IMR-90 (cell line): ENCODE measurements at regions of chr3 and their contacts with region 1.

Region 1: GRCh38 chr3:35908366-35909232 is 269.3 kb downstream of the ARPP21 start:
- DNase-seq: peak; percentile 70
- ATAC-seq: peak; percentile 72
- H3K4me3 ChIP-seq: no peak overlapping the region
- H3K27ac ChIP-seq: no peak overlapping the region
- H3K4me1 ChIP-seq: no peaks in the 10 kb centered on the region
- H3K27me3 ChIP-seq: no peaks in the 10 kb centered on the region
- CTCF ChIP-seq: peak; percentile 61
- POLR2A ChIP-seq: no peak
- RAD21 ChIP-seq: peak; percentile 55

Region 2: GRCh38 chr3:34260271-34261006 is 1648.2 kb before region 1 on chr3:
- CTCF ChIA-PET with region 1: no interaction called
- POLR2A ChIA-PET with region 1: no interaction called
- dilution Hi-C with region 1: no loop called
- in situ Hi-C with region 1: no loop called
- intact Hi-C with region 1: loop called (anchors 2 kb)
- DNase-seq: peak; percentile 50
- ATAC-seq: peak; percentile 82
- H3K4me3 ChIP-seq: no peak overlapping the region
- H3K27ac ChIP-seq: no peak overlapping the region
- H3K4me1 ChIP-seq: no peaks in the 10 kb centered on the region
- H3K27me3 ChIP-seq: no peaks in the 10 kb centered on the region
- CTCF ChIP-seq: peak; percentile 57
- POLR2A ChIP-seq: no peak
- RAD21 ChIP-seq: peak; percentile 43

Region 3: DNA sequence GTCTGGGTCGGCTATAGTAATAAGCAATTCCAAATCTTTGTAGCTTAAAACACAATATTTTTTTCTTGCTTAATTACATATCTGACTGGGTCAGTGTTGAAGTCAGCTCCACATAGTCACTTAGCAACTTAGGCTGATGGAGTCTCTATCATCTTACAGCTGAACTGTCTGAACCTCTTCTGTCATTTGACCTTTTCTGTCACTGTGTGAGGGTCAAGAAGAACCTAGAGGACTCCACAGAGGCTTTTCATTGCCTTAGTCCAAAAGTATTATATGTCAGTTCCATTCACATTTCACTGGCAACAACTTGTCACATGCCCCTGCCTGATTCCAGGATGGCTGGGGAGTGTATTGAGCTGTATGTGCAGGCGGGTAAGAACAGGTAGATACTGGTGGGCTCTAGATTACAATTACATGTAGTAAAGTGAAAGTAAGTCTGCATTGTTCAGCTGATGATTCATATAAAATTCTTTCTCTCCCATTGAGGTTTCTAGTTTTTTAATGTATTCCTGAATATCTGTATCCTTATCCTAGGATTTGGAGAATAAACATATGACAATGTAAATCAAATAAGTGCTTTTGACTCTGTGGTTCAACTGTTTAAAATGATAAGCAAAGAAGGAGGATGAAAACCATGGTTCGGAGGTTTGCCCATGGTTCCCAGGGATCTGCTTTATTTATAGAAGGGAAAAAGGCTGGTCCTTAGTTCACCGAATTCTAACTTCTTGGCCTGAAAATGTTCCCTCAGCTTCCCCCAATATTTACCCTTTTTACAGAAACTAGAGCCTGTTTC is 275.1 kb before region 1 on chr3:
- CTCF ChIA-PET with region 1: no interaction called
- POLR2A ChIA-PET with region 1: no interaction called
- dilution Hi-C with region 1: no loop called
- in situ Hi-C with region 1: no loop called
- intact Hi-C with region 1: loop called (anchors 1 kb)
- DNase-seq: no peak
- ATAC-seq: no peak
- H3K4me3 ChIP-seq: no peak overlapping the region
- H3K27ac ChIP-seq: no peak overlapping the region
- H3K4me1 ChIP-seq: no peaks in the 10 kb centered on the region
- H3K27me3 ChIP-seq: no peaks in the 10 kb centered on the region
- CTCF ChIP-seq: no peak
- POLR2A ChIP-seq: no peak
- RAD21 ChIP-seq: no peak

Region 4: GRCh38 chr3:35871009-35871408 is 37.6 kb before region 1 on chr3:
- CTCF ChIA-PET with region 1: no interaction called
- POLR2A ChIA-PET with region 1: no interaction called
- dilution Hi-C with region 1: no loop called
- in situ Hi-C with region 1: no loop called
- intact Hi-C with region 1: no loop called
- DNase-seq: no peak
- ATAC-seq: no peak
- H3K4me3 ChIP-seq: no peak overlapping the region
- H3K27ac ChIP-seq: no peak overlapping the region
- H3K4me1 ChIP-seq: no peaks in the 10 kb centered on the region
- H3K27me3 ChIP-seq: no peaks in the 10 kb centered on the region
- CTCF ChIP-seq: no peak
- POLR2A ChIP-seq: no peak
- RAD21 ChIP-seq: no peak

Region 5: GRCh38 chr3:35986161-35986560 is 77.6 kb after region 1 on chr3:
- CTCF ChIA-PET with region 1: no interaction called
- POLR2A ChIA-PET with region 1: no interaction called
- dilution Hi-C with region 1: no loop called
- in situ Hi-C with region 1: no loop called
- intact Hi-C with region 1: no loop called
- DNase-seq: no peak
- ATAC-seq: no peak
- H3K4me3 ChIP-seq: no peak overlapping the region
- H3K27ac ChIP-seq: no peak overlapping the region
- H3K4me1 ChIP-seq: no peaks in the 10 kb centered on the region
- H3K27me3 ChIP-seq: no peaks in the 10 kb centered on the region
- CTCF ChIP-seq: no peak
- POLR2A ChIP-seq: no peak
- RAD21 ChIP-seq: no peak

Region 6: DNA sequence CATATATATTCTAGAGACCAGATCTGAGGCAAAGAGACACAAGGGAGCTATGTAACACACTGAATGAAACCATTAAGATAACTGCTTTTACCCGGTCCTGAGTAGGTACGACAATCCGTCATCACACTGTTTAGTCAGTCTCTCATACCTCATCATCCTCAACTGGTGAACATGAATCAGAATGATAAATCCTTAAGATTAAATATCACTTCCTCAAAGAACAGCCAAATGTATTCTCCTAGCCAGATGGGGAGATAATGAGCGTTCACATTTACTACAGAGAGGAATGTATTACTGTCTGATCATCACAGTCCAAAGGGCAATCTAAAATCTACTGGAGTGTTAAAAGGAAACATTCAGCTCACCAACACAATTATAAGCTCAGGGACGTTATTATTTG is 152.4 kb after region 1 on chr3:
- CTCF ChIA-PET with region 1: no interaction called
- POLR2A ChIA-PET with region 1: no interaction called
- dilution Hi-C with region 1: no loop called
- in situ Hi-C with region 1: no loop called
- intact Hi-C with region 1: no loop called
- DNase-seq: no peak
- ATAC-seq: no peak
- H3K4me3 ChIP-seq: no peak overlapping the region
- H3K27ac ChIP-seq: no peak overlapping the region
- H3K4me1 ChIP-seq: no peaks in the 10 kb centered on the region
- H3K27me3 ChIP-seq: no peaks in the 10 kb centered on the region
- CTCF ChIP-seq: no peak
- POLR2A ChIP-seq: no peak
- RAD21 ChIP-seq: no peak

Region 7: GRCh38 chr3:36269274-36269673 is 360.7 kb after region 1 on chr3:
- CTCF ChIA-PET with region 1: no interaction called
- POLR2A ChIA-PET with region 1: no interaction called
- dilution Hi-C with region 1: no loop called
- in situ Hi-C with region 1: no loop called
- intact Hi-C with region 1: no loop called
- DNase-seq: no peak
- ATAC-seq: no peak
- H3K4me3 ChIP-seq: no peak overlapping the region
- H3K27ac ChIP-seq: no peak overlapping the region
- H3K4me1 ChIP-seq: no peaks in the 10 kb centered on the region
- H3K27me3 ChIP-seq: no peaks in the 10 kb centered on the region
- CTCF ChIP-seq: no peak
- POLR2A ChIP-seq: no peak
- RAD21 ChIP-seq: no peak